Activated naive CD4-positive, alpha-beta T cell treated with anti-CD3 and anti-CD28 coated beads for 36 hours (primary cell): ENCODE measurements at regions of chr18 and their contacts with region 1.

Region 1: DNA sequence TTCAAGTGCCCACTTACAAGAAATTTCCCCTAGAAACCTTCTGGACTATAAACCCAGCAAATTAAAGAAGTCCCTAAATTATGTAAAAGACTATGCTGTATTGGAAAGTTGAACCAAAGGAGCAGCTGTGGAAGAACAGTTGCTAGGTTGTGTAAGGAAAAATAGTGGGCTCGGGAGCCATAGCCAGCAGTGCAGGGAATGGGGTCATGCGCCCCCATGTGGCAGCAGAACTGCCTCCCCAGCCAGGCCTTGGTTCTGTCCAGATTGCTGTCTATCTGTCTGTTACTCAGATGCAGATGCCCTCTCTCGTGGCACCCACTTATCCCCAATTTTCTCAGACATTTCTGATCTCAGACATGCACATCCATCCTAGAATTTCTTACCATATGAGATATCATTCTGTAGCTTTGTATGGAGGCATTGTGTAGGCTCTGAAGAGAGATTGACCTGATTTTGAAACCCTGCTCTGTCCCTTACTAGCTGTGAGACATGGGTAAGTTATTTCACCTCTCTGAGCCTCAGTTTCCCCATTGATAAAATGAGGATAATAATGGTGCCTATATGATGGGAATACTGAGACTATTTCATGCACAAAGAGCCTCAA is 258.3 kb downstream of the SS18 start:
- DNase-seq: peak; percentile 46
- H3K4me3 Mint-ChIP-seq: no peak overlapping the region
- H3K27ac Mint-ChIP-seq: no peak overlapping the region
- H3K4me1 Mint-ChIP-seq: no peaks in the 10 kb centered on the region
- H3K27me3 Mint-ChIP-seq: no peaks in the 10 kb centered on the region

Region 2: GRCh38 chr18:24878289-24878688 is 953.8 kb before region 1 on chr18:
- CTCF ChIA-PET with region 1: no interaction called
- intact Hi-C with region 1: loop called (anchors 2 kb)
- DNase-seq: no peak
- H3K4me3 Mint-ChIP-seq: no peak overlapping the region
- H3K27ac Mint-ChIP-seq: no peak overlapping the region
- H3K4me1 Mint-ChIP-seq: no peaks in the 10 kb centered on the region
- H3K27me3 Mint-ChIP-seq: no peaks in the 10 kb centered on the region